Mammary epithelial cell (primary cell): ENCODE measurements at regions of chr9 and their contacts with region 1.

Region 1: DNA sequence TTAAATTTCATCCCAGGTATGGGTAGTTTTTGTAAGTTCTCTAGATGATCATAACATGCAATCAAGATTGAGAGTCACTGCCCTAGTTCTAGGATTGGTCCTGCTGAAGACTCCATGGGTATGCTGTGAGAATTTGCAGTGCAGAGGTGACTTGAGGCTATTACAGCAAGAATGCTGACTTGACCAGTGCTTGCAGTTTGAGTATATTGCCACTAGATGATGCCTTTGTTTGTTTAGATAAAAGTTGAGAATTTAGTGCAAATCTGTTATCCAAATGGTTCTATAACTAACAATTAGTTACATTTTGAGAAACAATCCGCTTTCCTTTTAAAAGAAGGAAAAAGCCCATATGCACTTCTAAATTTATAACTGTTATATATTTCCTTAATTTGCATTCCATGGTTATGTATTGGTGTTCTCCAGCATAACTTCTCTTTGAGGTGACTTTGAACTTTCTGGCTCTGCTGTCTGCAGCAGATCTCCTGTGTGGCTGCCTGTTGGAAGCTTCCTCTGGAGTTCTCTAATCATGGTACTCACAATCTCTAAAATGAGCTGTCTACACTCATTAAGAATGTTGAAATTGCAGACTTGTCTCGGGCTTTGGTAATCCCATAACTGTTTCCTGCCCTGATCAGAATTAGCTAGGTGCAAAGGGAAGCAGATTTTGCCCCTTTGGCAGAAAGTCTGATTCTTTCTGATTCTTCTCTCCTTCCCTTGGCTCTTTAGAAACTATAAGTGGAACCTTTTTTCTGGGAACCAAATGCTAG is 24.9 kb downstream of the MELK start:
- DNase-seq: peak; percentile 38
- H3K4me3 ChIP-seq: no peak overlapping the region
- H3K27ac ChIP-seq: no peak overlapping the region
- H3K4me1 ChIP-seq: no peaks in the 10 kb centered on the region
- H3K27me3 ChIP-seq: no peaks in the 10 kb centered on the region
- CTCF ChIP-seq: peak; percentile 76 to 90

Region 2: DNA sequence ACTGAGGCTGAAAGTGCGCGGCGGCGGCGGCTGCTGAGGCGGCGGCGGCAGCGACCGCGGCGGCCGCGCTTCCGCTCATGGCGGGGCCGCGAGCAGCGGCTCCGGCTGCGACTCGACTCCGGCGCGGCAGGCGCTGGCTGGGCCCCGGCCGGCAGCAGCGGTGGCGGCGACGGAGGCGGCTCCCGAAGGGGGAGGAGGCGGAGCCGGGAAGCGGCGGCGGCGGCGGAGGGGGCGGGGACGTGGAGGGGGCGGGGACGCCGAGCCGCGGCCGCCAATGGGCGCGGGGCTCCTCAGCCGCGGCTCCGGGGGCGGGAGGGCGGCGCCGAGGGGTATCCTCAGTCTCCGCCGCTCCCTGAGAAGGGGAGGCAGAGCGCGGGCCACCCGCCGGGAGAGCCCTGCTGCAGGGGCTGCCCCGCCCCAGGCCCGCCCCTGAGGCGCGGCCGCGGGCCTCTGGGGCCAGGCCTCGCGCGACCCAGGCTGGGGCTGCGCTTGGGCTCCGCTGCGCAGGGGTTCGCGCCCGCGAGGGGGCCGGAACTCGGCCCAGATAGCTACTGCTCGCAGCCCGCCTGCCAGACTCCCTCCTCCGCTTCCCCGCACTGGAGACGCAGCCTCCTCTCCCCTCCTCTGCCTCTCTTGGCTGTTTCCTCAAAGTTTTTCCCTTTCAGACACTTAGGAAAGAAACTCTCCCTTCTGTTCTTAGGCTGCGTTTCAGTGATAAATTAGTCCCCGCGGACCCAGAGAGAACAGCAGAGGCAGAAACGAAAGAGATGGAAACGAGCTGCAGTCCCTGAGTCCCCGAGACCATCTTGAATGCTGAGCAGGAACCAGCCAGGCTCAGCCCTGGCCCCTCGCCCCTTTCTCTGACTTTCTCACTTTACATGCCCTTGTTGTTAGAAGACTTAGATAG is 109.9 kb before region 1 on chr9:
- CTCF ChIA-PET with region 1: no interaction called
- dilution Hi-C with region 1: no loop called
- in situ Hi-C with region 1: no loop called
- intact Hi-C with region 1: no loop called
- DNase-seq: peak; percentile 87
- H3K4me3 ChIP-seq: peak overlapping the region; percentile 55 to 92 (median 90)
- H3K27ac ChIP-seq: peak overlapping the region; percentile 64
- H3K4me1 ChIP-seq: peaks cover 18% of the 10 kb centered on the region
- H3K27me3 ChIP-seq: no peaks in the 10 kb centered on the region
- CTCF ChIP-seq: no peak

Region 3: DNA sequence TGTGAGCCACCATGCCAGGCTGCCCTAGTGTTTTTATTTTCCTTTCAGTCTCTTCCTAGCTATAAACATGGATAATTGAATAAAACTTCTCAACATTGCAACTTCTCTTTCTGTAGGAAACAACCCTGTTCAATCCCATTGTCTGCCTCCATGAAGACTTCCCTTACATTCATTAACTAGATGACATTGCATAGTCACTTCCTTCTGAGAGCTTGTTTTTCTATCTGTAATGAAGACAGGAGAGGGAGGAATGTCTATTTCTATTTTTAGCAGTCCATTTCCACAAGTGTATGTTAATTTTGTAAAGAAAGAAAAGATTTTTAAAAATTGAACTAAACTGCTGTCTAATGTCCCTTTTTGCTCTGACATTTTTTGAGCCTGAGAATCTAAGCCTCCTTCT is 80.5 kb before region 1 on chr9:
- CTCF ChIA-PET with region 1: no interaction called
- dilution Hi-C with region 1: no loop called
- in situ Hi-C with region 1: no loop called
- intact Hi-C with region 1: no loop called
- DNase-seq: no peak
- H3K4me3 ChIP-seq: no peak overlapping the region
- H3K27ac ChIP-seq: no peak overlapping the region
- H3K4me1 ChIP-seq: no peaks in the 10 kb centered on the region
- H3K27me3 ChIP-seq: no peaks in the 10 kb centered on the region
- CTCF ChIP-seq: no peak

Region 4: GRCh38 chr9:36676778-36677485 is 79.3 kb after region 1 on chr9:
- CTCF ChIA-PET with region 1: no interaction called
- dilution Hi-C with region 1: no loop called
- in situ Hi-C with region 1: no loop called
- intact Hi-C with region 1: loop called (anchors 10 kb)
- DNase-seq: no peak
- H3K4me3 ChIP-seq: no peak overlapping the region
- H3K27ac ChIP-seq: no peak overlapping the region
- H3K4me1 ChIP-seq: no peaks in the 10 kb centered on the region
- H3K27me3 ChIP-seq: no peaks in the 10 kb centered on the region
- CTCF ChIP-seq: no peak

Region 5: DNA sequence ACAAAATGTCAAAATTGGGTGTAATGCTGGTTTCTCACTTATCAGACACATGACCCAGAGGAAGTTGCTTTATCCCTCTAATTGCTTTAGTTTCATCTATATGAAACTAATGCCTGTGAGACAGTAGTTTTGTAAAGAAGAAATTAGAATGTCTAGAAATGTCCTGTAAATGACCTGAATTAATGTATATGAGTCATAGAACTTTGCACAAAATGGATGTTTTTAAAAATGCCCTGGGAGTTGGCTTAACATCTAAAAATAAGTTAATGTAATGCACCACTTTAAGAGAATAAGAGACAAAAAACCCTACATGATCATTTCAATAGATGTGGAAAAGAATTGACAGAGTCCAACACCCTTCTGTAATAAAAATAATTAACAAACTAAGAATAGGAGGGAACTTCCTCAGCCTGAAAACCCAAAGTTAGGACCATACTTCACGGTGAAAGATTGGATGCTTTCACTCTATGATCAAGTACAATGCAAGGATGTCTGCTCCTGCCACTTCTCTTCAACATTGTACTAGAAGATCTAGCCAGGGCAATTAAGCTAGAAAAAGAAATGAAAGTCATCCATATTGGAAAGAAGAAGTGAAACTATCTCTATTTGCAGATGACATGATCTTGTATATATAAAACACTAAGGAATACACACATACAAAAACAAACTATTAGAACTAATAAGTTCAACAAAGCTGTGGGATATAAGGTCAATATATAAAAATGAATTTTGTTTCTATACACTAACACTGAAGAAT is 93.0 kb after region 1 on chr9:
- CTCF ChIA-PET with region 1: no interaction called
- dilution Hi-C with region 1: no loop called
- in situ Hi-C with region 1: no loop called
- intact Hi-C with region 1: no loop called
- DNase-seq: no peak
- H3K4me3 ChIP-seq: no peak overlapping the region
- H3K27ac ChIP-seq: no peak overlapping the region
- H3K4me1 ChIP-seq: no peaks in the 10 kb centered on the region
- H3K27me3 ChIP-seq: no peaks in the 10 kb centered on the region
- CTCF ChIP-seq: no peak

Region 6: DNA sequence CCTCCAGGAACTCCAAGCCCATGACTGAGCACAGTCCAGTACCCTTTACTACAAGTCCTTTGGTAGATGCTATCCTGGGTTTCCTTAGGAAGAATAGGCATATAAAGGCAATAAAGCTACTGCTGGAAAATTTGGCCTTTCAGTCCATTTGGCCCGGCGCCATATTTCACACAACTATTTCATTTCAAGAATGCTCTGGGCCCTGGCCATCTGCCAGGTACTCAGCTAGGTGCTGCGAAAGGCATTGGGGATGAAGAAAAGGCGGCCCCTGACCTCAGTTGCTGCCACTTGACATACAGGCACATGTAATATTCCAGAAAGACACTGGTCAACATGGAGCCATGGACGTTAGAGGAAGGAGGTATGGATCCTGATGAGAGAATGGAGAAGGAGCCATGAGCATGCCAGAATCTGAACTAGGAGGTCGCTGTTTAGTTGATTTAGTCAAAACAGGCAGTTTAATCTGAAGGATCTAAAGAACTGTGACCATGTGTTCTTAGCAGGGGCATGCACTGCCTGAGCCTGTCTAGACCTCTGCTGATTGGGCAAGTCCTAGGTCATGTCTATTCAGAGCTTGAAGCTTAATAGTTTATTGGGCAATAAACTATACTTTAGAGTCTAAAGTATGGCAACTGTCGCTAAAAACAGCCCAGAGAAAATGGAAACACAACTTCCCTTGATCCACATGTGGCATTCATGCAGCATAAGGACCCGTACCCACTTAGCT is 124.4 kb after region 1 on chr9:
- CTCF ChIA-PET with region 1: no interaction called
- dilution Hi-C with region 1: no loop called
- in situ Hi-C with region 1: no loop called
- intact Hi-C with region 1: no loop called
- DNase-seq: no peak
- H3K4me3 ChIP-seq: no peak overlapping the region
- H3K27ac ChIP-seq: no peak overlapping the region
- H3K4me1 ChIP-seq: no peaks in the 10 kb centered on the region
- H3K27me3 ChIP-seq: no peaks in the 10 kb centered on the region
- CTCF ChIP-seq: no peak